Dendritic cell treated with granulocyte-macrophage colony-stimulating factor and Interleukin-4, amounts not matched to agents 40 ng/mL and 50 ng/mL, for 4 days (primary cell): ENCODE measurements at regions of chr18 and their contacts with region 1.

Region 1: GRCh38 chr18:67023059-67023458 is 419.2 kb upstream of the CDH19 start:
- H3K4me3 Mint-ChIP-seq: no peak overlapping the region
- H3K27ac Mint-ChIP-seq: no peak overlapping the region
- H3K4me1 Mint-ChIP-seq: no peaks in the 10 kb centered on the region
- H3K27me3 Mint-ChIP-seq: no peaks in the 10 kb centered on the region

Region 2: GRCh38 chr18:66966171-66966570 is 56.9 kb before region 1 on chr18:
- intact Hi-C with region 1: loop called (anchors 10 kb)
- H3K4me3 Mint-ChIP-seq: no peak overlapping the region
- H3K27ac Mint-ChIP-seq: no peak overlapping the region
- H3K4me1 Mint-ChIP-seq: no peaks in the 10 kb centered on the region
- H3K27me3 Mint-ChIP-seq: no peaks in the 10 kb centered on the region

Region 3: DNA sequence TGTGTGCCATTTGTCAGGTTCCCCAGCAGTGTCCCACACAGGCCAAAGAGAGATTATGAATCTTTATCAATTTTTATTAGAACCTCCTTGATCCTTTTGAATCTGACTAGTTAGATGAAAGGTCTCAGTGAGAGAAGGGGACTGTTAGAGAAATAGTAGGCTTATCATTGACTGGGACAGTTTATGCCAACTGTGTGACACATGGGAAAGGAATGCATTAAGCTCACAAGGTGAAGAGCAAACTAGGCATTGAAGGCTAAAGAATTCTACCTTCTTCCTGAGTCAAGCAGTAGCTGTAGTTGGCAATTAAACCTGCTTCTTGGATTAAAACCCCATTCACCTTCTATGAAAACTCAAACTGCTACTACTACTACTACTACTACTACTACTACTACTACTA is 29.6 kb before region 1 on chr18:
- intact Hi-C with region 1: no loop called
- H3K4me3 Mint-ChIP-seq: no peak overlapping the region
- H3K27ac Mint-ChIP-seq: no peak overlapping the region
- H3K4me1 Mint-ChIP-seq: no peaks in the 10 kb centered on the region
- H3K27me3 Mint-ChIP-seq: no peaks in the 10 kb centered on the region